Posterior cingulate gyrus (tissue), 11 donors: ENCODE measurements at regions of chr7 and their contacts with region 1.

Region 1: GRCh38 chr7:155190688-155191087 is 107.0 kb upstream of the INSIG1 start:
- DNase-seq: peak in 6 of 10 donors; percentile 26 to 91 (median 68)

Region 2: DNA sequence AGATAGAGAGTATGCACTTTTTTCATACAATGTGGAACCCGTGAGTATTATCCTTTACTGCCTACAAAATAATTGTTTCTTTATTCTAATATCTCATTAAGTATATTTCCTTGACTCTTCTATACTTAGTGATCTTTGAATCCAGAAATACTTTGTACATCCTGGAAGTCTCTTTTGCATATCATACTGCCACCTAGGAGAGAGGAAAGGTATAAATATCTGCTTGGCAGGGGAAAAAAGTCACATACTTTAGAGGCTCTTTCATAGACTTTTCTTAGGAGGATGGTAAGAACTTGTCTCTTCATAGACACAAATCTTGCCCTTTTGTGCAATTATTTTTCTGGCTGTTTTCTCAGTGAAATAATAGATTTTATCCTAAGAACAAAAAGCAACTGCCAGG is 623.8 kb before region 1 on chr7:
- intact Hi-C with region 1: no loop called
- DNase-seq: no peak

Region 3: GRCh38 chr7:155344600-155345433 is 154.1 kb after region 1 on chr7:
- intact Hi-C with region 1: loop called (anchors 1 kb)
- DNase-seq: peak; percentile 44 to 96 (median 80)

Region 4: GRCh38 chr7:155439311-155440017 is 248.8 kb after region 1 on chr7:
- intact Hi-C with region 1: no loop called
- DNase-seq: peak in 3 of 10 donors; percentile 44 to 63 (median 49)

Region 5: GRCh38 chr7:155729834-155730233 is 539.1 kb after region 1 on chr7:
- intact Hi-C with region 1: no loop called
- DNase-seq: no peak